ENCODE measurements at regions of chr14 and their contacts with region 1.

Region 1: DNA sequence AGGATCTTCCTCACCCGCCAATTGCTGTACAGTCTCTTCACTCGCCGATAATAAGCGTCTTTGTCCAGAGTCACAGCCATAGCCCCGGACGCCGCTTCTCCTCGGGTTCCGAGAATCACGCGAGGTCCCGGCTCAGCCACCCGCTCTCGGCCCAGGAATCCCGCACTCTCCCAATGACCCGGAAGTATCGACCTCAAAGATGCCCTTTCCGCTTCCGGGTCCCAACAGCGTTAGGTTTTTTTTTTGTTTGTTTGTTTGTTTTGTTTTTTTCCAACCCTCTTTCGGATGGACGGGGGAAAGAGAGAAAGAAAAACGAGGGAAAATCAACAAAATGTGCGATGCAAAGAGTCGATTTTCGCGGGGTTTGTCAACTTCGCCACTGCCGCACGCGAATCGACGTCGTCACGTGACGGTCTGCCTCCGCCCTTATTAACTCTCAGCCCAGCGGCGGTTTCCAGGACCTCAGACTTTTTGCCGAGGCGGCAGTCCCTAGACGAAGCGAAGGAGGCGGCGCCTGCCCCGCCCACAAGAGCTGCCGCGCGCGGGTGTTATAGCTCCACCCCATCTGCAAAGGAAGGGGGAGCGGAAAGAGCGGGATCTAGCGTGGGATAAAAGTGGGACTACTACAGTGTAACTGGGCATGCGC is at the start of gene SUPT16H:
- DNase-seq: peak; percentile 95
- H3K4me3 Mint-ChIP-seq: peak within 1 kb of the TSS; percentile 100
- H3K27ac Mint-ChIP-seq: peak within 1 kb of the TSS; percentile 99
- H3K4me1 Mint-ChIP-seq: peaks cover 8% of the 10 kb centered on the region
- H3K27me3 Mint-ChIP-seq: no peaks in the 10 kb centered on the region
- CTCF ChIP-seq: no peak
- total RNA-seq, gene SUPT16H: 97.0 and 98.3 TPM in 2 replicates

Region 2: DNA sequence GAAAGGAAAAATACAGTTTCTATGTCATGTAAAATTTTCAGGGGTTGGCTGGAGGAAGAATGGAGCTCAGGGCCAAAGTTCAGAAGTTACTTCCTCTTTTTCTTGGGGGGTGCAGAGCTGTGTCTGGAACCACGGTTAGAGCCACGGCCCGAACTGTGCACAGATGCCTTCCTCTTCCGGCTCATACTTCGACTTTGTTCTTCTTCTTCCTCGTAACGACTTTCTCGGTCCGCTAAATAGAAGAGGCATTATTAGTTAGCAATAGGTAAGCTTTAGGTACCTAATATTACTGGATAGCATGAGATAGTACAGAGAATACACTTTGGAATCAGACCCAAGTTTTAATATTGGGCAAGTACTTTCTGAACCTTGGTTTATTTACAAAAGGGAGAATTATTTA is 31.4 kb before region 1 on chr14:
- CTCF ChIA-PET with region 1: no interaction called
- POLR2A ChIA-PET with region 1: no interaction called
- intact Hi-C with region 1: no loop called
- DNase-seq: no peak
- H3K4me3 Mint-ChIP-seq: no peak overlapping the region
- H3K27ac Mint-ChIP-seq: no peak overlapping the region
- H3K4me1 Mint-ChIP-seq: no peaks in the 10 kb centered on the region
- H3K27me3 Mint-ChIP-seq: no peaks in the 10 kb centered on the region
- CTCF ChIP-seq: no peak

Region 3: DNA sequence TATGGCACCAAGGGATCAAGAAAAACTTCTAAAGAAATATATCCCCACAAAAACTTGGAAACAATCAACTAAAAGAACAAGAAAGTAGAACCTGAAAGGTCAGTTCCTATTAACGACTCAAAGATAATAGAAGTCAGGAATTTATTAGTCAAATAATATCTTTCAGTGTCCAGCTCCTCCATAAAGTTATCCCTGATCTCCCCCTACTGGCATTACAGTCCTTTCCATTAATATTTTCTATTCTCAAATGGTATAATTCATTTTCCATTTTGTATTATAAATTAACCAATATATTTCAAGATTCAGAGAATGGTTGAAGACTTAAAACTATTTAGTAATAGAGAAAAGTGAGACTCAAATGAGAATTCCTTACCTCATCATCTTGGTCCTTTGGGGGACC is 11.5 kb after region 1 on chr14:
- CTCF ChIA-PET with region 1: interaction called, 9 read pairs
- POLR2A ChIA-PET with region 1: interaction called, 12 read pairs
- intact Hi-C with region 1: no loop called
- DNase-seq: no peak
- H3K4me3 Mint-ChIP-seq: no peak overlapping the region
- H3K27ac Mint-ChIP-seq: no peak overlapping the region
- H3K4me1 Mint-ChIP-seq: no peaks in the 10 kb centered on the region
- H3K27me3 Mint-ChIP-seq: no peaks in the 10 kb centered on the region
- CTCF ChIP-seq: no peak

Region 4: DNA sequence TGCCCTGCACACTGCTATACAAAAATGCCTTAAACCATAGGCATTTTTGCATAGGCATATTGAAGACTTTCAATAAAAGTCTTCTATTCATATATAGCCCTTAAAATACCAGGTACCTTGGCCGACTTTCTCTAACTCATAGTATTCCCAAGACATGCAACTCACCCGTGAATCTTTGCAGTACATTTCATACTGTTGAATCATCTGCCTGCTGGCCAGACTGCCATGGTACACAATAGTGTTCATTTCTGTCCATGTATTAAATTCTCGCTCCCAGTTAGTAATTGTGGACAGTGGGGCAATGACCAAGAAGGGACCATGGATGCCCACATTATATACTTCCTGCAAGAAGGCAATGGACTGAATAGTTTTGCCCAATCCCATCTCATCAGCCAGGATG is 24.2 kb after region 1 on chr14:
- CTCF ChIA-PET with region 1: no interaction called
- POLR2A ChIA-PET with region 1: interaction called, 10 read pairs
- intact Hi-C with region 1: no loop called
- DNase-seq: peak; percentile 62
- H3K4me3 Mint-ChIP-seq: no peak overlapping the region
- H3K27ac Mint-ChIP-seq: no peak overlapping the region
- H3K4me1 Mint-ChIP-seq: peaks cover 12% of the 10 kb centered on the region
- H3K27me3 Mint-ChIP-seq: no peaks in the 10 kb centered on the region
- CTCF ChIP-seq: no peak

Measured in MCF 10A (cell line).